ENCODE measurements at regions of chr20 and their contacts with region 1.

Region 1: DNA sequence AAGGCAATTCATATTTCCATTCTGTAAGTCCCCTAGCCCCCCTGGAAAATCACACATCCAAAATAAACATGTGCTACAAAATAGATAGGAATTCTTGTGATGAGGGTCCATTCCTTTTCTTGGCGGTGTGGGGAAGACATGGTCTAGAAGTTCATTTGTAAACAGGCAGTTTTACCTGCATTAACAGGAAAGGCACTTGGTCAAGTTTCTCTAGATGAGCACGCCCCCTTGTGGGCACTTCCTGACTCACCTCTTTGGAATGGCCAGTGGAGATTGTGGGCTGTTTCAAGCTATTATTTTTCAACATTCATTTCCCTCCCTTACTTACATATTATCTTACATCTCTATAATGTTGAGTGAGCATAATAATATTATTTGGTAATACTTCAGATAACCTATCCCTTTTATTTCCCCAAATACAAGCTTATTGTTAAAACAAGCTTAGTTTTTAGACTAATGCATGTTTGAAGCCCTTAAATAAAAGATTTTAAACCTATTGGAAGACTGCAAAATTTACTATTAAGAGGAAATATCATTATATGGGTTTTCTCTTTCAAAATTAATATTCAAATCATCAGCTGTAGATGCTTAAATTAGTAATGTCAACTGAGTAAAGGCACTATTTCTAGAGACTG is 92.1 kb downstream of the TASP1 start:
- DNase-seq: peak; percentile 35
- CTCF ChIP-seq: peak; percentile 74

Region 2: GRCh38 chr20:12925214-12925755 is 621.3 kb before region 1 on chr20:
- CTCF ChIA-PET with region 1: interaction called, 10 read pairs
- POLR2A ChIA-PET with region 1: no interaction called
- DNase-seq: peak; percentile 71
- CTCF ChIP-seq: peak; percentile 74

Region 3: DNA sequence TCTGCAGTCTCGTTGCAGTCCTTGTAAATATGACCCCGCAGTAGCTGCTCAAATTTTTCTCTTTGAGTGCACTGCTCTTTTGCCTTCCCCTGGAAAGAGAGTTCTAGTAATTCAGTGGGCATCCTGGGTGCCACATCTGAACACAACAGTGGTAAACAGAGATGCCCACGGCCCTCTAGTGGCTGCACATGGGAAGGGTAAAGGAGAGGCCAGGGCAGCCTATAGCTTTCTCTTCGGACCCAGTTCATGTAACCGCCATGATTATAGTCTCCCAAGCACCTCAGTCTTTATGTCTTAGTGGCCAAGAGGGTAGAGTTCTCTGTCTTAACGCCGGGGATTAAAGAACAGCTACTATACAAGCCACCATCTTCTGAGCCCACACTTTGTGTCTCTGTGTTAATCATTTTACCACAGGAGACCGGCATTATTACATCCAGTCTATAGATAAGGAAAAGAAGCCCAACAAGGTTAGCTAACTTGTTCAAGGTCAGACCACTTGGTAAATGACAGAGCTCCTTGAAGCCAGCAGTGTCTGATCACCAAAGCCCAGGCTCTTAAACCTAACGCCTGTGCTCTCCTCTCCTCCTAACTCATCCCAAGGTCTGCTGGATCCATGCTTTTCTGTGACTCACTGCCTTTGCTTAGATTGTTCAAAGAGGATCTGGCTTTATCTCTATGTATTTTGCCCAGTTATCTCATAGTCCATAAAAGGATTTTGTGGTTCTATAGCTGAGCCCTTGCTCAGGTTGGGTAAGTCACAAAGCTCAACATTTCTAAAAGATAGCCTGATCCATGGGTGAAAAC is 243.8 kb before region 1 on chr20:
- CTCF ChIA-PET with region 1: interaction called, 18 read pairs
- POLR2A ChIA-PET with region 1: no interaction called
- DNase-seq: peak; percentile 50
- CTCF ChIP-seq: peak; percentile 54

Region 4: DNA sequence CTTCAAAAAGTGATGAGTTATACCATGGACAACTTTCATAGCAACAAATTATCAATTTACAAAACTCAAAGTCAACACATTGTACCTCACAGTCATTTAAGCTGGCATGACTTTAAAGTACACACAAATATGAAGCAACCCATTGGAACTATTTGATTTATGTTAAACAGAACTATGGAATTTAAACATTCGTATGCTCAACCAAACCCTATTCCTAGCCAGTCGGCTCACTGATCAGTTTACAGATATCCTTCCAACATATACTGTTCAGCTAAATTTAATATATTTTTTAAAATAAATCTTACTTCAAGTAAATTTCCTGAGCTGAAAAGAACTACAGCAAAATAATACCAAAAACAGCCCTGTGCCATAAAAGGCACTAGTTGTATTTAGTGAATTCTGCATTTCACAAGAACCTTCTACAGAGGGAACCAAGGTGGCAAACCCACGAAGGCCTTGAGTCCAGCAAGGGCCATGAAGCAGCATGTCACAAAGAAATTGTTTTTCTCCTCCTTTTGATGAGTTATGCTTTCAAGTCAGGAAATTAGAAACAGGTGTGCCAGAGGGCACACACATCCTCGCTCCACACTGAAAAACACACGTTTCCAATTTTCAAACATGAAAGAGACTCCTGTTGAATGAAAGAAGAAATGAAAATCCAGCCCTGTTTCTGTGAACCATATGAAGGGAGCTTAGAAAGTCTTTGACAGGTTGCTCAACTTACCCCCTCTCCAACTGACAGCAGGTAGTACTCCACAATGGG is 30.6 kb before region 1 on chr20:
- CTCF ChIA-PET with region 1: interaction called, 13 read pairs
- POLR2A ChIA-PET with region 1: no interaction called
- DNase-seq: no peak
- CTCF ChIP-seq: no peak

Region 5: GRCh38 chr20:13574071-13574470 is 27.5 kb after region 1 on chr20:
- CTCF ChIA-PET with region 1: interaction called, 19 read pairs
- POLR2A ChIA-PET with region 1: no interaction called
- DNase-seq: no peak
- CTCF ChIP-seq: no peak

Region 6: DNA sequence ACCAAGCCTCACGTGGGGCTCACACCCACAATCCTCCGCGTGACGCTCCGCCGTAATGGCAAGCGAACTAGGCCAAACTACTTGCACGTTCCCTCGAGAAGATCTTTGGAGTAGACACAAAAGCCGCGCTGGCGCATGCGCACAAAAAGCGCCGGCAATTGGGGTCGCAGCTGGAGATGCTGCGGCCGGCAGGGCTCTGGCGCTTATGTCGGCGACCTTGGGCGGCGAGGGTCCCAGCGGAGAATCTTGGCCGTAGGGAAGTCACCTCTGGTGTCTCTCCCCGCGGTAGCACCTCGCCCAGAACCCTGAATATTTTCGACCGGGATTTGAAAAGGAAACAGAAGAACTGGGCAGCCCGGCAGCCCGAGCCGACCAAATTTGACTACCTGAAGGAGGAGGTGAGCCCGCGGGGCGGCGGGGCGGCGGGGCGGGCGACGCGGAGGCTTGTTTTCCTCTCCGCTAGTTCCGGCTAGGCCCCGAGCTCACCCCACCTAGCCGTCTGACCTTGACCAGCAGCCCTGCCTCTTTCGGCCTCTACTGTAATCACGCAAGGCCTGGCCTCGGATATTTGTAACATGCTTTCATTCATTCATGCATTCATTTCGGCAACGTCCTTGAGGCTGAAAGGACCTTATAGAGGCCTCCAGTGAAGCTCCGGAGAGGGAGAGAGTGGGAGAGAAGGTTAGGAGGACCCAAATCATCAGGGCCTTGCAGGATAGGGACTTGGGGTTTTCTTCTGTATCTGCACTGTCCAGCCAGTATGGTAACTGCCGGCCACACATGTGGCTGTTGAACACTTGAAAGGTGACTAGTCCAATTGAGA is 238.5 kb after region 1 on chr20 and contains the starts of genes ESF1 and NDUFAF5:
- CTCF ChIA-PET with region 1: interaction called, 18 read pairs
- POLR2A ChIA-PET with region 1: no interaction called
- DNase-seq: peak; percentile 93
- CTCF ChIP-seq: no peak

Measured in GM10248 (cell line).